Activated B cell treated with CpG ODN at 0.5 μM for 24 hours (primary cell): ENCODE measurements at regions of chr2 and their contacts with region 1.

Region 1: GRCh38 chr2:26033818-26034636 is at the start of gene RAB10:
- DNase-seq: peak; percentile 99
- ATAC-seq: peak; percentile 94
- H3K4me3 Mint-ChIP-seq: peak within 1 kb of the TSS; percentile 90
- H3K27ac Mint-ChIP-seq: peak within 1 kb of the TSS; percentile 92
- H3K4me1 Mint-ChIP-seq: peaks cover 39% of the 10 kb centered on the region
- H3K27me3 Mint-ChIP-seq: no peaks in the 10 kb centered on the region
- CTCF ChIP-seq: no peak
- total RNA-seq, gene RAB10: 79.3 and 94.6 TPM in 2 replicates

Region 2: DNA sequence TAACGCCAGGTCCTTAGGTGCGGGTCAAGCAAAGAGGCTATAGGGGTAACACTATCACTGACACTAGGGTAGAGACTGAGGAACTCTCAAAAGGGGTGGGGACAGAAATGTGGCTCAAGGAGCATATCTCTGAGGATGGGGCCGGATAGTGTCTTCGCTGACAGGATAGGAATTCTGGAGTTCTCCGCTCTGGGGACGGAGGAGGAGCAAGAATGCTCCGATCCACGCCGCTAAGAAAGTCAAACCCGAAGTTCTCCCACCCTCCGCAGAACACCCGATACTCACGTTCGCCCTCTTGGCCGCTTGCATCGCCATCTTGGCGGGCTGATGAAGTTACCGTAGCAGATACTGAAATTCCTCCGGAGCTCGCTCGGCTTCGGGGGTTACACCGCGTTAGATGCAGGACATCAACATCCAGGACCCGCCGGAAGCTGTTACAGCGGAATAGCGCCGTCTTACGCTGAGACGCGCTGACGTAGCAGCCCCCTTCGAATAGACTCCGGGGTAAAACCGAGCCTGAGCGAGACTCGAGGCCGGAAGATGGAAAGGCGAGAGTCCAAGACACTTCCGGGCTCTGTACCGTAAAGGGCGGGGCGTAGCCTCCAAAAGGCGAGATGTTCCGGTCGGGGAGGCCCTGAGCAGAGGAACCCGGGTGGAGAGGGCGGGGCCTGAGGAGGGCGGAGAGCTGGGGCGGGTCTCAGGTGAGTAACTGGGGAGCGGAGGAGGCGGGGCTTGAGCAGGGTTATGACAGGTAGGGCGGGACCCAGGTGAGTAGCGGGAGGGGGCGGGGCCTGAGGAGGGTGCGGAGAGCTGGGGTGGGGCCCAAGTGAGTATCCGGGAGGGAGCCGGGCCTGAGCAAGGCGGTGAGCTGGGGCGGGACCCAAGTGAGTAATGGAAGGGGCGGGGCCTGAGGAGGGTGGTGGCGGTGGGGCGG is 1957.8 kb before region 1 on chr2 and contains the start of gene SF3B6:
- CTCF ChIA-PET with region 1: no interaction called
- POLR2A ChIA-PET with region 1: no interaction called
- intact Hi-C with region 1: loop called (anchors 5 kb)
- DNase-seq: peak; percentile 98
- ATAC-seq: peak; percentile 87
- H3K4me3 Mint-ChIP-seq: peak within 1 kb of the TSS; percentile 100
- H3K27ac Mint-ChIP-seq: peak within 1 kb of the TSS; percentile 99
- H3K4me1 Mint-ChIP-seq: peaks cover 28% of the 10 kb centered on the region
- H3K27me3 Mint-ChIP-seq: no peaks in the 10 kb centered on the region
- CTCF ChIP-seq: no peak
- total RNA-seq, gene SF3B6: 70.4 and 71.4 TPM in 2 replicates

Region 3: GRCh38 chr2:25878361-25879132 is 155.5 kb before region 1 on chr2 and contains the start of gene ASXL2:
- CTCF ChIA-PET with region 1: no interaction called
- POLR2A ChIA-PET with region 1: interaction called, 25 read pairs
- intact Hi-C with region 1: loop called (anchors 1 kb)
- DNase-seq: peak; percentile 98
- ATAC-seq: peak; percentile 88
- H3K4me3 Mint-ChIP-seq: peak within 1 kb of the TSS; percentile 98
- H3K27ac Mint-ChIP-seq: peak within 1 kb of the TSS; percentile 100
- H3K4me1 Mint-ChIP-seq: peaks cover 24% of the 10 kb centered on the region
- H3K27me3 Mint-ChIP-seq: peaks cover 2% of the 10 kb centered on the region
- CTCF ChIP-seq: no peak
- total RNA-seq, gene ASXL2: 38.4 and 41.9 TPM in 2 replicates

Region 4: GRCh38 chr2:25991965-25992364 is 42.1 kb before region 1 on chr2:
- CTCF ChIA-PET with region 1: interaction called, 6 read pairs
- POLR2A ChIA-PET with region 1: interaction called, 6 read pairs
- intact Hi-C with region 1: loop called (anchors 2 kb)
- DNase-seq: no peak
- ATAC-seq: no peak
- H3K4me3 Mint-ChIP-seq: no peak overlapping the region
- H3K27ac Mint-ChIP-seq: no peak overlapping the region
- H3K4me1 Mint-ChIP-seq: peaks cover 6% of the 10 kb centered on the region
- H3K27me3 Mint-ChIP-seq: no peaks in the 10 kb centered on the region
- CTCF ChIP-seq: no peak

Region 5: DNA sequence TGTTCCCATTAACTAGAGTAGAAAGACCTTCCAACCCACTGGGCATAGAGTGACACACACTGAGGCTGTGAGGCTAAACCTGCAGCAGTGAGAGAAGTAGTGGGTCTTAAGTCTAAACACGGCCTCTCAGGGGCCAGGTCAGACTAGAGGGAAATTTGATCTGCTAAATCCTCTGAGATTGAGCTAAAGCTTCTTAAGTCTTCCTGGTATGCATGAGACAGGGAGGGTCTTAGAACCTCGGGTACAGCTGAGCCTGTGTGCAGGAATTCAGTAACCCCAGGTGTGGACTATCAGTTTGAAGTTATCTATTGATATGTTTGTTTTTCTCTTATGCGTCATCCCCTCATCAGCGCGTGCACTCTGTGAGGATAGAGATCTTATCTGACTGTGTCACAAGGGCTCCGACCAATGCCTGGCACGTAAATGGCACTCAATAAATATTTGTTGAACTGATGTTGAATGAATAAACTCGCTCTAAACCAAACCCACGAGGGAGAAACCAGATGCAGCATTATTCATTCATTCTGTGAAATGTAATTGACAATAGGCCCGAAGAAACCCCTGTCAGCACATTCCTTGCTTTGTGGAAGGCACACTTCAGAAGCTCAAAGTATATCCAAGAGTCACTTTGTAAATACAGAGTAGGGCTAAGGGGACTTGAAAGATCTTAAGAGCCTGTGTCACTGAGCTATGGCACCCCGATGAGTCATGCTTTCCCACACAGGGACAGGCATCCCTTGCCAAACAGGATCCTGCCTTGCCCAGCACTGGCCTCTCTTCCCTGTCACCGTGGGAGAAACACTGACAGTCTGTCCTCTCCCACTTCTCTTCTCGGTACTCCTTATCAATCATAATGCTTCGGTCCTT is 21.8 kb before region 1 on chr2:
- CTCF ChIA-PET with region 1: no interaction called
- POLR2A ChIA-PET with region 1: no interaction called
- intact Hi-C with region 1: no loop called
- DNase-seq: no peak
- ATAC-seq: no peak
- H3K4me3 Mint-ChIP-seq: no peak overlapping the region
- H3K27ac Mint-ChIP-seq: no peak overlapping the region
- H3K4me1 Mint-ChIP-seq: no peaks in the 10 kb centered on the region
- H3K27me3 Mint-ChIP-seq: peaks cover 3% of the 10 kb centered on the region
- CTCF ChIP-seq: no peak

Region 6: GRCh38 chr2:26068602-26069298 is 34.7 kb after region 1 on chr2:
- CTCF ChIA-PET with region 1: interaction called, 7 read pairs
- POLR2A ChIA-PET with region 1: interaction called, 6 read pairs
- intact Hi-C with region 1: loop called (anchors 1 kb)
- DNase-seq: no peak
- ATAC-seq: peak; percentile 81
- H3K4me3 Mint-ChIP-seq: no peak overlapping the region
- H3K27ac Mint-ChIP-seq: peak overlapping the region; percentile 63
- H3K4me1 Mint-ChIP-seq: peaks cover 45% of the 10 kb centered on the region
- H3K27me3 Mint-ChIP-seq: no peaks in the 10 kb centered on the region
- CTCF ChIP-seq: no peak

Region 7: DNA sequence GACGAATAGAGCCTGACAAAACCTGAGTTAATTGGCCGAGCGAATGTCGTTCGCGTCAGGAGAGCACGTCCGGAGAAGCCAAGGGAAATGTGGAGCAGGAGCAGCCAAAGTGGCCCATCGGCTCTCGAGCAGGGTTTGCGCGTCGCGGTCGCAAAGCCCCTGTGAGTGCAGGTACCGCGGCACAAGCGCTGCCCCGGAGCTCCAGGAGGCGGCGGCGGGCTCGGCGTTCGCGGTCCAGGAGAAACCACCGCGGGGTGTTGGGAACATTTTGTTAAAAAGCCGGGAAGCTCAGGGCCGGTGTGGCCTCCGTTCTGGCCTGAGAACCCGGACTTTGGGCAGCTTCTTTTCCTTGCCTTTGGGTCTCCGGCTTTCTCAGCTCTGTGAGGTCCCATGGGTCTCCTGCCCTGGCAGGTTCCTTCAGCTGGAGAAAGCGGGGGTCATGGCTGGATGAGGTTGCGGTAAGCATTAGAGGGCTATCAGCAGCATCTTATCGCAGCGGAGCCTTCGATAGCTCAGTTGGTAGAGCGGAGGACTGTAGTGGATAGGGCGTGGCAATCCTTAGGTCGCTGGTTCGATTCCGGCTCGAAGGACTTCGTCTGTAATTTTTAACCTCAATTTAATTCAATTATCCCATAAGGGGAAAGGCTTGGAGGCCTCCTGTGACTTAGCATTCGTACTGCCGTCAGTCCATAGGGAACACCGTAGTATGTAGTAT is 1016.4 kb after region 1 on chr2:
- CTCF ChIA-PET with region 1: no interaction called
- POLR2A ChIA-PET with region 1: interaction called, 3 read pairs
- intact Hi-C with region 1: loop called (anchors 5 kb)
- DNase-seq: peak; percentile 91
- ATAC-seq: peak; percentile 60
- H3K4me3 Mint-ChIP-seq: peak overlapping the region; percentile 97
- H3K27ac Mint-ChIP-seq: peak overlapping the region; percentile 100
- H3K4me1 Mint-ChIP-seq: peaks cover 19% of the 10 kb centered on the region
- H3K27me3 Mint-ChIP-seq: peaks cover 6% of the 10 kb centered on the region
- CTCF ChIP-seq: no peak